Psoas muscle (tissue), 8 donors: ENCODE measurements at regions of chr15 and their contacts with region 1.

Region 1: GRCh38 chr15:73146419-73146818 is 94.2 kb downstream of the NEO1 start:
- DNase-seq: no peak
- ATAC-seq: no peak
- H3K4me3 ChIP-seq: no peak overlapping the region
- H3K27ac ChIP-seq: no peak overlapping the region
- H3K4me1 ChIP-seq: peaks cover 14% of the 10 kb centered on the region
- H3K27me3 ChIP-seq: no peaks in the 10 kb centered on the region
- CTCF ChIP-seq: no peak

Region 2: GRCh38 chr15:73108676-73109075 is 37.7 kb before region 1 on chr15:
- intact Hi-C with region 1: loop called in 1 of 2 experiments (anchors 2 kb)
- DNase-seq: no peak
- ATAC-seq: no peak
- H3K4me3 ChIP-seq: no peak overlapping the region
- H3K27ac ChIP-seq: no peak overlapping the region
- H3K4me1 ChIP-seq: peaks cover 6% of the 10 kb centered on the region
- H3K27me3 ChIP-seq: no peaks in the 10 kb centered on the region
- CTCF ChIP-seq: no peak

Region 3: GRCh38 chr15:73156431-73157191 is 10.2 kb after region 1 on chr15:
- intact Hi-C with region 1: no loop called
- DNase-seq: no peak
- ATAC-seq: no peak
- H3K4me3 ChIP-seq: no peak overlapping the region
- H3K27ac ChIP-seq: no peak overlapping the region
- H3K4me1 ChIP-seq: peaks cover 28% of the 10 kb centered on the region
- H3K27me3 ChIP-seq: no peaks in the 10 kb centered on the region
- CTCF ChIP-seq: no peak

Region 4: DNA sequence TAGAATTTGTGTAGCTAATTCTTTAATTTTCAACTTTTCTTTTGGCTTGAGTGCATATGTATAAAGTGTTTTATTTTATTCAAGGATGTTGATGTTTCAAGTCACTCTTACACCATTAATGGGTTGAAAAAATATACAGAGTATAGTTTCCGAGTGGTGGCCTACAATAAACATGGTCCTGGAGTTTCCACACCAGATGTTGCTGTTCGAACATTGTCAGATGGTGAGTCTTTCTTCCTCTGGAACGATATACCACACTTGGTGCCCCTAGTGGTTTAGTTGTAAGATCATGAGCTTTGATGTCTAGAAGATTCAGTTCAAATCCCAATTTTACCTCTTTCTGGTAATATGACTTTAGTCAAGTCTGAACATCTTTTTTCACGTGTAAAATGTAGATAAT is 103.1 kb after region 1 on chr15:
- intact Hi-C with region 1: no loop called
- DNase-seq: no peak
- ATAC-seq: no peak
- H3K4me3 ChIP-seq: no peak overlapping the region
- H3K27ac ChIP-seq: no peak overlapping the region
- H3K4me1 ChIP-seq: no peaks in the 10 kb centered on the region
- H3K27me3 ChIP-seq: no peaks in the 10 kb centered on the region
- CTCF ChIP-seq: no peak